Ovary (tissue), 10 donors: ENCODE measurements at regions of chr16 and their contacts with region 1.

Region 1: DNA sequence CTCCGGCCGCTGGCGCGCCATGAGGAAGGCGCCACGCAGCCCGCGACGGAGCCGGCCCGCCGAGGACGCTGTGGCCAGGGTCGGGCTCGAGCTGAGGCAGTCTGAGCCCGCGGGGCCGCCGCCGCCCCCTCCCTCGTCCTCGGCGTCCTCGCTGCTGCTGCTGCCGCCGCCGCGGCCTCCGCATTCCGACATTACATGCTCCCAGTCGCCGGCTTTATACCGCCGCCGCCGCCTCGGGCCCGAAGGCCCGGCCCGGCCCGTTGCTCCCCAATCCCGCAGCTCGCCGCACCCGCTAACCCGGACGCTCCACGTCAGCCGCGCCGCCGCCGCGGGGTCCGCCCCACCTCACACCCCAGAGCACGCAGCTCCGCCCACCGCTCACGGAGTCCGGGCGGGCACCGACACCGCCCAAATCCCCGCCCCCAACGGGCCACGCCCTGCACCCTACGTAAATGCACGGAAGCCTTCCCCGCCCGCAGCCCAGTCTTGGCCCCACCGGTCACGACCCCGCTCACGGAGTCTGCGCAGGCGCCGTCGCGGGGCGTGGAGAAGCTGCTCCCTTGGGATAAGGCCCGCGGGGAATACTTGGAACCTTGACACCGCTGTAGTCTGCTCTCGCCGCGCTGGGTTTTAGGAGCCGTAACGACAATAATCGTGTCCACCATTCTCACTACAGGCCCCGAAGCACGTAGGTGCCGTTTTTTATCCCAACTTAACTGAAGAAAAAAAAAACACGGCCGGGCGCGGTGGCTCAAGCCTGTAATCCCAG is at the start of gene TXNDC11:
- DNase-seq: peak; percentile 99 to 100 (median 100)
- H3K4me3 ChIP-seq: peak within 1 kb of the TSS; percentile 75
- H3K27ac ChIP-seq: peak within 1 kb of the TSS; percentile 53 to 89
- H3K4me1 ChIP-seq: peaks cover 7% of the 10 kb centered on the region
- H3K27me3 ChIP-seq: no peaks in the 10 kb centered on the region
- CTCF ChIP-seq: no peak
- EP300 ChIP-seq: peak; percentile 88
- POLR2A ChIP-seq: peak; percentile 91
- total RNA-seq, gene TXNDC11: 32.3 to 48.6 (median 40.6) TPM

Region 2: DNA sequence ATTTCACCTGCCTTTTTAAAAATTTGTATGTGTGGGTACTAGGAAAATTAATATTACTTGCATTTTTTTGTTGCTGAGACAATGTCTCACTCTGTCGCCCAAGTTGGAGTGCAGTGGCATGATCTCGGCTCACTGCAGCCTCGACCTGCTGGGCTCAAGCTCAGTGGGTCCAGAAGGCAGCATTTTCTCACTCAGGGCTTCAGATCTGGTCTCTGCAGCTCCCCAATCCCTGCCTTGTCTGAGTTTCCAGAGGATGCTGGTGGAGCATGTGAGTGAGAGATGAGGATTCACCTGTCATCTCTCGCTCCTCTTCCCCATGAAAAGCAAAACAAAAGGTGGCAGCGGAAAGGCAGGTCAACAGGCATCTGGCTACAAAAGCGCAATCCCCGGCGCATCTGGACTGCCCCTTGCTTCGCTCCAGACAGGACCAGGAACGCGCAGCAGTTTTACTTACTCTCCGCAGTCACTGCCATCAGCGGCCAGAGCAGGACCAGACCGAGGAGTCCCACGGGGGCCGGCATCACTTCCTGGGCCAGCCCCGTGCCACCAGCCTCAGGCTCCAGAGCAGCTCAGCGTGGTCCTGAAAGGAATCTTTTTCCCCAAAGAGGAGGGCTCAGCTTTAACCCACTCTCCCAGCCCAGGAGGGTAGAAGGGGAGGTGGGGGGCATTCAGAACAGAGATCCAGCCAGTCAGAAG is 215.9 kb before region 1 on chr16:
- intact Hi-C with region 1: no loop called
- DNase-seq: no peak
- H3K4me3 ChIP-seq: no peak overlapping the region
- H3K27ac ChIP-seq: no peak overlapping the region
- H3K4me1 ChIP-seq: no peaks in the 10 kb centered on the region
- H3K27me3 ChIP-seq: no peaks in the 10 kb centered on the region
- CTCF ChIP-seq: no peak
- EP300 ChIP-seq: no peak
- POLR2A ChIP-seq: no peak

Region 3: DNA sequence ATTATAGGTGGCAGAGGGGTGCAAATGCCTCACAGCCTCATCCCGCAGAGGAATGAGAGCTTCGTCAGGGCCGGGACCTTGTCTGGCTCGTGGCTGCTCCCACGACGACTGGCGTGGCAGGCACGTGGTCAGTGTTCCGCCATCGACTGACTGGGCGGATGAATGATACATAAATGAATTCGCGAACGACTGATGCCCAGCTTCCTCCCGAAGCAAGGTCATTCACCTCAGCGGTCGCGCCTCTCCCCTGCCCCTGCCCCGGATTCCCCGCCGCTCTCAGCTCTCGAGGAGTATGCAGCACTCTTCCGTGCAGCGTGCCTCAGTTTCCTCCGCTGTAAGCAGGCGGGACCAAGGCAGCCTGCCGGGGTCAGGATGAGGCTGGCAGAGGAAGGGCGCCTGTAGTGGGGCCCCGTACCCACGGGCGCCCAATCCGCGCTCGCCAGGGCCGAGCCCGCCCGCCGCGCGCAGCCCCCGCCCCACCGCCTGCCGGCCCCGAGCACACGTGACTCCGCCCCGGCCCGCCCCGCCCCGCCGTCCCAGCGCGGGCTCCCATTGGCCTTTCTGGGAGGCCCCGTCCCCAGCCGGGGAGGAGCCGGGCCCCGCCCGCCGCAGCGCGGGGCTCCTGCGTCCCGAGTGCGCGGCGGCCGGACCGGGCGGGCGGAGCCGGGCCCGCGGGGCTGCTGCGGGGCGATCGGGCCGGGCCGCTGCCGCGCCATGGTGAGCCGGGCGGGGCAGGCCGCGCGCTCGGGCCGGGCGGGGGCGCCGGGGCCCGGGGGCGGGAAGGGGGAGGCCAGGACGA is 74.7 kb before region 1 on chr16 and contains the start of gene SNN:
- intact Hi-C with region 1: loop called in 1 of 4 experiments (anchors 10 kb)
- DNase-seq: peak; percentile 87 to 93 (median 90)
- H3K4me3 ChIP-seq: peak within 1 kb of the TSS; percentile 66
- H3K27ac ChIP-seq: peak within 1 kb of the TSS; percentile 60 to 64
- H3K4me1 ChIP-seq: peaks cover 20% of the 10 kb centered on the region
- H3K27me3 ChIP-seq: no peaks in the 10 kb centered on the region
- CTCF ChIP-seq: no peak
- EP300 ChIP-seq: no peak
- POLR2A ChIP-seq: no peak
- total RNA-seq, gene SNN: 8.0 to 40.3 (median 24.7) TPM

Region 4: DNA sequence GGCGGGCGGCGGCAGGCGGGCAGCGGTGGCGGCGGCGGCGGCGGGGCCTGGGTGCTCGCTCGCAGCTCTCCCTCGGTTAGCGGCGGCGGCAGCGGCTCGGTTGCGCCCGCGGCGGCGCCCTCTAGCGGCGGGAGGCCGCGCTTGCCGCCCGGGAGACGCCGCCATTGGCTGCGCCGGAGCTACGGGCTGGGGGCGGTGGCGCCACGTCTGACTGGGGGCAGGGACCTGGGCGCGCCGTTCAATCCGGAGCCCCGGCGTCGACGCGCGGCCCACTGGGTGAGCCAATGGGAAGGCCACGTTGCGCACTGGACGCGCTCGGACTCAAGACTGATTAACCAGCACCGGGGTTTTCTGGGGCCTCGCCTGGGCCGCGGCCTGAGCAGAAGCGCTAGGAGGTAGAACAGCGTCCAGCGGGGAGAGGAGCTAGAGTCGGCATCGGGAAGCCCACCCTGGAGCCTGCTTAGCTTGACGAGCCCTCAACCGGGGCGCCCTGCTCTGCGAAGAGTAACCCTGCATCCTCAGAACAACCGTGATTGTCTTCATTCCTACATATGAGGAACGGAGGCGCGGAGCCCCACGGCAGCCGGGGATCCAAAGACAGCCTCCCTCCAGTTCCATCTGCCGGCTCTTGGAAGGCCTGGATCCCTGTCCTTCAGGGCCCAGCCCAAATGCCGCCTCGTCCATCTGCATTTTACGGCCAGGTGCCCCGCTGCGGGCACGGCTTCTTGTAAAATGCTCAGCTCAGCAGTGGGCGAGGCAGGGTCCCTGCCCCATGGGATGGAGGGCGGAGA is 54.6 kb after region 1 on chr16 and contains the start of gene ZC3H7A:
- intact Hi-C with region 1: loop called in 2 of 4 experiments (anchors 2 to 10 kb)
- DNase-seq: peak; percentile 95 to 98 (median 96)
- H3K4me3 ChIP-seq: peak within 1 kb of the TSS; percentile 84
- H3K27ac ChIP-seq: peak within 1 kb of the TSS; percentile 97 to 98
- H3K4me1 ChIP-seq: peaks cover 11% of the 10 kb centered on the region
- H3K27me3 ChIP-seq: no peaks in the 10 kb centered on the region
- CTCF ChIP-seq: peak; percentile 50 to 99 (median 97)
- EP300 ChIP-seq: no peak
- POLR2A ChIP-seq: peak; percentile 80
- total RNA-seq, gene ZC3H7A: 42.1 to 60.9 (median 50.7) TPM